MCF 10A (cell line): ENCODE measurements at regions of chr11 and their contacts with region 1.

Region 1: DNA sequence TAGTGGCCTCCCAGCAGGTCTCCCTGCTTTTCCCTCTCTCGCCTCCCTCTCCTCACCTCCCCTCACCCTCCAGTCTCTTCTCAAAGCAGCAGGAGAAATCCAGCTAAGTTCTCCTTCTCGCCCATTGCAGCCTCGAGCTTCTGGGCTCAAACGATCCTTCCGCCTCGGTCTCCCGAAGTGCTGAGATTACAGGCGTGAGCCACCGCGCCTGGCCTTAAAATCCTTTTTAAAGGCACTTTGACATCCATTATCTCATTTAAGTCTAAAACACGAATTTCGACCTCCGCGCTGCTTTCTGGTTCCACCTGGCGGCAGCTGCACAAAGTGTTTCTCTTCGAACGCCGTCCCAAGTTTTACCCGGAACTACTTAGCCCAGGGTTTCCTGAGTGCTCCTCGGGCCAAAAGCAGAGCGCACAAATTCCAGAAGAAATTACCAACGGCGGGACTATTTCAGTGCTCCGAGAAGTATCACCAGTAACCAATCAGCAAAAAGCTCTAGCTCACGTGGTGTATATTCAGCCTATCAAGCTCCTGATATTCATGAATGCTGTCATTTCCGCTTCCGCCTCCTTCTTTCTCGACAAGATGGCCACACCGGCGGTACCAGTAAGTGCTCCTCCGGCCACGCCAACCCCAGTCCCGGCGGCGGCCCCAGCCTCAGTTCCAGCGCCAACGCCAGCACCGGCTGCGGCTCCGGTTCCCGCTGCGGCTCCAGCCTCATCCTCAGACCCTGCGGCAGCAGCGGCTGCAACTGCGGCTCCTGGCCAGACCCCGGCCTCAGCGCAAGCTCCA is at the start of gene EIF3F:
- DNase-seq: peak; percentile 99
- H3K4me3 Mint-ChIP-seq: peak within 1 kb of the TSS; percentile 92
- H3K27ac Mint-ChIP-seq: peak within 1 kb of the TSS; percentile 82
- H3K4me1 Mint-ChIP-seq: peaks cover 24% of the 10 kb centered on the region
- H3K27me3 Mint-ChIP-seq: no peaks in the 10 kb centered on the region
- CTCF ChIP-seq: peak; percentile 91
- total RNA-seq, gene EIF3F: 255 and 309 TPM in 2 replicates

Region 2: GRCh38 chr11:7098235-7098832 is 888.6 kb before region 1 on chr11:
- CTCF ChIA-PET with region 1: interaction called, 4 read pairs
- POLR2A ChIA-PET with region 1: no interaction called
- intact Hi-C with region 1: loop called (anchors 5 kb)
- DNase-seq: peak; percentile 63
- H3K4me3 Mint-ChIP-seq: no peak overlapping the region
- H3K27ac Mint-ChIP-seq: no peak overlapping the region
- H3K4me1 Mint-ChIP-seq: no peaks in the 10 kb centered on the region
- H3K27me3 Mint-ChIP-seq: peaks cover 84% of the 10 kb centered on the region
- CTCF ChIP-seq: peak; percentile 73

Region 3: DNA sequence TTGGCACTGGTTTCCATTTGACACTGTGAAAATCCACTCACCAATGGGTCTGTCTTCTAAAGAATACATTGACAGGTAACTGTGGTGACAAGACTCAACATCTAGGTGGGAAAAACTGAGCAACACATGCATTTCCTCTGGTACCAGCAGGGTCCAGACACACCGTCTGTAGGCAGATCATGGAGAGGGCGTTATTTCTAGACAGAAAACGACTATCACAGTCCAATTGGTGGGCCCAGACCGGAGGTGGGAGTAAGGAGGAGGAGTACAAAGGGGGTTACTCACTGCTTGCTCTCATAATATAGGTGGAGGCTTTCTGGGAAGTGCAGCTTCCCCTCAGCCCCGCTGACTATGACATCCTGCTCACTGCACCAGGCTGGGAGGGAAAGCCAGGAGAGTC is 290.5 kb before region 1 on chr11:
- CTCF ChIA-PET with region 1: interaction called, 11 read pairs
- POLR2A ChIA-PET with region 1: no interaction called
- intact Hi-C with region 1: loop called (anchors 5 kb)
- DNase-seq: no peak
- H3K4me3 Mint-ChIP-seq: no peak overlapping the region
- H3K27ac Mint-ChIP-seq: no peak overlapping the region
- H3K4me1 Mint-ChIP-seq: peaks cover 5% of the 10 kb centered on the region
- H3K27me3 Mint-ChIP-seq: peaks cover 41% of the 10 kb centered on the region
- CTCF ChIP-seq: no peak

Region 4: GRCh38 chr11:7882860-7883259 is 104.1 kb before region 1 on chr11:
- CTCF ChIA-PET with region 1: interaction called, 17 read pairs
- POLR2A ChIA-PET with region 1: no interaction called
- intact Hi-C with region 1: no loop called
- DNase-seq: no peak
- H3K4me3 Mint-ChIP-seq: no peak overlapping the region
- H3K27ac Mint-ChIP-seq: no peak overlapping the region
- H3K4me1 Mint-ChIP-seq: no peaks in the 10 kb centered on the region
- H3K27me3 Mint-ChIP-seq: no peaks in the 10 kb centered on the region
- CTCF ChIP-seq: no peak

Region 5: DNA sequence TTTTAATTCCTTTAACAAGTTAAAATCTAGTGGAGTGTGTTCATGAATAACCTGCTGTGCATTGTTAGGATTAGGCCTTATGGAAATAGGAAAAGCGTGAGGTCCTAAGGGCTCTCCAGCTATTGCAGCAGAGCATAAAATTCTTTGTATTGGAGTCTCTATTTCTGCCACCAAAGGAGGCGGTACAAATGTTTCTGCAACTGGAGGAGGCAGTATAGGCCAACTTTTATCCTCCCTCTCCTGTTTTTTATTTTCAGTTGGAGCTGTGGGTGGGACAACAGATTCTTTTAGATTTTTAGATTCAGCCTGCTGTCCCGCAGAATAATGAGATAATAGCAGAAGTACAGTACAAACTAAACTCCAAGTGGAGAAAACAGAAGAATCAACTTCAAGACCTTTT is 82.0 kb before region 1 on chr11:
- CTCF ChIA-PET with region 1: interaction called, 98 read pairs
- POLR2A ChIA-PET with region 1: interaction called, 9 read pairs
- intact Hi-C with region 1: loop called (anchors 1 kb)
- DNase-seq: peak; percentile 8
- H3K4me3 Mint-ChIP-seq: no peak overlapping the region
- H3K27ac Mint-ChIP-seq: no peak overlapping the region
- H3K4me1 Mint-ChIP-seq: peaks cover 26% of the 10 kb centered on the region
- H3K27me3 Mint-ChIP-seq: no peaks in the 10 kb centered on the region
- CTCF ChIP-seq: no peak

Region 6: DNA sequence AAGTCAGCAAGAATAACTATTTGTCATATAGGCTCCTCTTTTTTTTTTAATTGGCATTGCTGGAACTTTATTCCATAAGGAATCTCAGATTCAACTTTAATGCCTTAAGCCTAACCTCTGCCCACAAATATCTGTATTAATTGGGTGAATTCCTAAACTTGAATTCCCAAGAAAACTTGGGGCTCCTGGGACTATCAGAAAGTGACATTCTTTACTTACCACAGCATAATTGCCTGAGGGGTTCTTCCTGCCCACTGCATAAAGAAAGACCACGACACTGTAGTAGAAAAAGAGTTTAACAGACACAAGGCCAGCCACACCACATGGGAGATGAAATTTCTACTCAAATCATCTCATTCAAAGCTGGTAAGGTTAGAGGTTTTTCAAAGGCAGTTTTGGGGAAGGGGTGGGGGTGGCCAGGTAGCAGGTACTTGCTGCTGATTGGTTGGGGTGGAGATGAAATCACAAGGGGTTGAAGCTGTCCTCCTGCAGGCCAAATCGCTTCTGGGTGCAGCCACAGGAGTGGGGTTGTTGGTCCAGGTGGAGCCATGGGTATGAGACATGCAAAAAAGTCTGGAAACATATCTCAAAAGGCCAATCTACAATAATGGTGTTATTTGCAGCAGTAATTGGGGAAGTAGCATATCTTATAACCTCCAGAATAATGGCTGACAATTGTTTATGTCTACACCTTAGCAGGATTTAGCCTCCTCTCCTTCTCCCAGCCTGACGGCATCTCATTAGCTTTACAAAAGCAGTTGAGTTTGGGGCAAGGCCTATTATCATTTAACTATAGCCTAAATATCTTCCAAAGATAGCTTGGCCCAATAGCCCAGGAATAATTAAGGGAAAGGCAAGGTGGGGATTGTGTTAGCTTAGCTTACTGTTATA is 17.0 kb before region 1 on chr11:
- CTCF ChIA-PET with region 1: interaction called, 56 read pairs
- POLR2A ChIA-PET with region 1: interaction called, 3 read pairs
- intact Hi-C with region 1: no loop called
- DNase-seq: no peak
- H3K4me3 Mint-ChIP-seq: no peak overlapping the region
- H3K27ac Mint-ChIP-seq: no peak overlapping the region
- H3K4me1 Mint-ChIP-seq: peaks cover 24% of the 10 kb centered on the region
- H3K27me3 Mint-ChIP-seq: no peaks in the 10 kb centered on the region
- CTCF ChIP-seq: no peak

Region 7: GRCh38 chr11:8047382-8047781 is 60.4 kb after region 1 on chr11:
- CTCF ChIA-PET with region 1: no interaction called
- POLR2A ChIA-PET with region 1: no interaction called
- intact Hi-C with region 1: no loop called
- DNase-seq: no peak
- H3K4me3 Mint-ChIP-seq: no peak overlapping the region
- H3K27ac Mint-ChIP-seq: no peak overlapping the region
- H3K4me1 Mint-ChIP-seq: no peaks in the 10 kb centered on the region
- H3K27me3 Mint-ChIP-seq: peaks cover 66% of the 10 kb centered on the region
- CTCF ChIP-seq: no peak

Region 8: DNA sequence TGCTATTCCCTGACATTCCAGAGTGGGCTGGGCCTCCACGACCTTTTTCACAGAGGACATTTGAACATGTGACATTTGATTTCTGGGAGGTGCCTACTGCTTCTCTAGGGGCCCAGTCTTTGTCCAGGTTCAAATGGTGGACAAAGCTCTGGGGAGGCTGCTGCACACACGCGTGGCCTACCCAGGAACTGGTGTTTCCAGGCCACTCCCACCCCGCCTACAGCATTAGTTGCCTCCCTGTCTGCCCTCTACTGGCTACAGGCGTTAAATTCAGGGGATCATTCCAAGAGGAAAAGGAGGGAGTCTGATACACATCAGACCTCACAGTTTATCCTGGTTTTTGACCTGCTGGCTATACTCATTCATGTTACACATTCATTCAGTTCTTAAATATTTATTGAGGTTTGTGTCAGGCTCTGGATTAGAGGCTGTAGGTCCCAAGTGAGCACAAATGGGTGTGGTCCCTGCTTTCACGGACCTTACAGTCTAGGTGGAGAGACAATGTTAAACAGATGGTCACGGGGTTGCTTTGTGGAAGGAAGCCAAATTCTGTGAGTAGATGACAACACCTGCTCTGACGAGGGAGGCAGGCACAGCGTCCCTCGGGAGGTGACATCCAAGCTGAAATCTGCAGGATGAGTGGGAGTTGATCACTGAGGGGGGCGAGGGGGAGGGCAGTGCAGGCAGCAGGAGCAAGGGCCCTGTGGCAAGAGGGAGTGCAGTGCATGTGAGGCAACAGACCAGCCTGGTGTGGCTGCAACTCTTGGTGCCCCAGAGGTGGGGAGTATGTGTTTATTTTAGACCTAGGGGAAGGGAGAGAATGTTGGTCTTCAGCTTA is 105.8 kb after region 1 on chr11:
- CTCF ChIA-PET with region 1: interaction called, 12 read pairs
- POLR2A ChIA-PET with region 1: interaction called, 3 read pairs
- intact Hi-C with region 1: no loop called
- DNase-seq: peak; percentile 76
- H3K4me3 Mint-ChIP-seq: no peak overlapping the region
- H3K27ac Mint-ChIP-seq: no peak overlapping the region
- H3K4me1 Mint-ChIP-seq: no peaks in the 10 kb centered on the region
- H3K27me3 Mint-ChIP-seq: no peaks in the 10 kb centered on the region
- CTCF ChIP-seq: peak; percentile 50

Region 9: DNA sequence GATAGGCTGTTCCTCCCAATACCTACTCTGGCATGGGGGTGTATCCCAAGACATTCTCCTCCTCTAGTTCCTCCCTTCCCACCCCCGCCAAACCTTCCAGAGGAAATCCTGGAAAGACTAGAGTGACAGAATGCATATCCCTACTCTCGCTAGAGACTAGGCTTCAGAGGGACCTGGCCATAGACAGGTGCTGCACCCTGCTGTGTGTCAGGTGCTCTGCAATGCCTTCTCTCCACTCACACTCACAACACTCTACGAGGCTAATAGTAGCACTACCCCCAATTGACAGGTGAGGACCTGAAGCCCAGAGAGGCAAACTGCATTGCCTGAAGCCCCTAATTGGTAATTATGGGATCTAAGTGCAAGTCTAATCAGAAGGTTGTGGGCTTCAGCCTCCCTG is 322.9 kb after region 1 on chr11:
- CTCF ChIA-PET with region 1: no interaction called
- POLR2A ChIA-PET with region 1: no interaction called
- intact Hi-C with region 1: no loop called
- DNase-seq: peak; percentile 24
- H3K4me3 Mint-ChIP-seq: no peak overlapping the region
- H3K27ac Mint-ChIP-seq: no peak overlapping the region
- H3K4me1 Mint-ChIP-seq: no peaks in the 10 kb centered on the region
- H3K27me3 Mint-ChIP-seq: no peaks in the 10 kb centered on the region
- CTCF ChIP-seq: peak; percentile 20